AG04449 (cell line): ENCODE measurements at regions of chr11 and their contacts with region 1.

Region 1: DNA sequence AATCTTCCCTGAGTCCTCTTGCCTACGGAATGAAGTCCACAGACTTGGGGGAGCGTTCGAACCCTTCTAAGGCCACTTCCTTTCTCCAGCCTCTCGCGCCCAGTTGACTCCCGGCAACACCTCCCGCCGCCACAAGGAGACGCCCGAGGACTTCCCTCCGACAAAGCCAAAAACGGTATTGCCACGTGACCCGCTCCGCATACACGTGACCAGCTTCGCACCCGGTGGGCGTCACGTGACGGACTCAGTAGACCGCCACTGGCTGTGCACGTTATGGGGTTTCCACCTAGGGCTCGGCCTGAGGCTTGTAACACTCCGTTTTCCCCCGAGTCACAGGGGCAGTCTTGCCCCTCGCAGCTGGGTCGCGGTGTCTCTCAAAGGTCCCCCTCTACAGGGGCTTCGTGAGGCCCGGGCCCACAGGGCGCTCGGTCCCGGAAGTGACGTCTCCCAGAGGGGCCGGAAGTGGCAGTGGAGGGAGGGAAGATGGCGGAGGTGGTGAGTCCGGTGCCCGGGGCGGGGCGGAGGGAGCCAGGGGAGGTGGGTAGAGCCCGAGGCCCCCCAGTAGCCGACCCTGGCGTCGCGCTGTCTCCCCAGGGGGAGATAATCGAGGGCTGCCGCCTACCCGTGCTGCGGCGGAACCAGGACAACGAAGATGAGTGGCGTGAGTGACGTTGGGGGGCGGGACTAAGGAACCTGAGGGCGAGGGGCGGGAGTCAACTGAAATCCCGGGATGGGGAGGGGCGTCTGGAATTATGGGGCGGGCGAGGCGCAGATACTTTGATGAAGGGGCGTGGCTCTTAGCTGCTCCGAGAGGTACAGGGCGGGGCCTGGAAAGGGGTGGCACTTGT is at the start of gene KAT5:
- DNase-seq: peak; percentile 83
- H3K4me3 ChIP-seq: peak within 1 kb of the TSS; percentile 87
- CTCF ChIP-seq: peak; percentile 94

Region 2: DNA sequence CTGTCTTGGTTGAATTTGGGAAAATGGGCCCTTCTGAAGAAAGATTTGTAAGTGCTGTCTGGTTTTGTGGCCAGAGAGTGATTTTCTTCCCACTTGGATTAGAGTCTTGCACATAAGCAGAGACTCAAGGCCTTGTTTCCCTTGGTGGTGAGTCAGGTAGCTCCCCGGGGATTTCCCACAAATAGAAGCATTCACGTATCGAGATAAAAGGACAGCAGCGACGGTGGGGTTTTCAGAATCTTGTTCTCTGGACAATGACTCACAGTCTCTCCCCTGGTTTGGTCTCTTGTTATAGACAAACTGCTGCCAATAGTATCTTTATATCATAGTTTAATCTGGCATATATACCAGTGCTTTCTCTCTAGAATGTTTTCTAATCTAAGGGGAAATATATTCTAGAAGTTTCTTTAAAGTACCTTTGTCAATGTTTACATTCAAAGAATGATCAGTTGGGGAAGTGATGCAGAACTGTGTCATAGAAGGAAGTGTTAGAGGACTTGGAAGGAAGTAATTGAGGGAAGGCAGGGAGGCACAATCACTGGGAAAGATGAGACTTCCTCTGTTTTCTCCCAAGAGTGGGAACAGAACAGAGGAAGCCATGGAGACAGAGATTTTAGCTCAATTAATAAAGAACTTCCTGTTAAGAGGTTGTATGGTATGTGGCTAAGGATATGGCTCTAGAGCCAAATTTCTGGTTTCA is 432.1 kb before region 1 on chr11:
- CTCF ChIA-PET with region 1: no interaction called
- POLR2A ChIA-PET with region 1: no interaction called
- DNase-seq: peak; percentile 91
- H3K4me3 ChIP-seq: no peak overlapping the region
- CTCF ChIP-seq: no peak

Region 3: GRCh38 chr11:65773784-65774411 is 61.9 kb after region 1 on chr11:
- CTCF ChIA-PET with region 1: interaction called, 43 read pairs
- POLR2A ChIA-PET with region 1: no interaction called
- DNase-seq: no peak
- H3K4me3 ChIP-seq: no peak overlapping the region
- CTCF ChIP-seq: no peak

Region 4: DNA sequence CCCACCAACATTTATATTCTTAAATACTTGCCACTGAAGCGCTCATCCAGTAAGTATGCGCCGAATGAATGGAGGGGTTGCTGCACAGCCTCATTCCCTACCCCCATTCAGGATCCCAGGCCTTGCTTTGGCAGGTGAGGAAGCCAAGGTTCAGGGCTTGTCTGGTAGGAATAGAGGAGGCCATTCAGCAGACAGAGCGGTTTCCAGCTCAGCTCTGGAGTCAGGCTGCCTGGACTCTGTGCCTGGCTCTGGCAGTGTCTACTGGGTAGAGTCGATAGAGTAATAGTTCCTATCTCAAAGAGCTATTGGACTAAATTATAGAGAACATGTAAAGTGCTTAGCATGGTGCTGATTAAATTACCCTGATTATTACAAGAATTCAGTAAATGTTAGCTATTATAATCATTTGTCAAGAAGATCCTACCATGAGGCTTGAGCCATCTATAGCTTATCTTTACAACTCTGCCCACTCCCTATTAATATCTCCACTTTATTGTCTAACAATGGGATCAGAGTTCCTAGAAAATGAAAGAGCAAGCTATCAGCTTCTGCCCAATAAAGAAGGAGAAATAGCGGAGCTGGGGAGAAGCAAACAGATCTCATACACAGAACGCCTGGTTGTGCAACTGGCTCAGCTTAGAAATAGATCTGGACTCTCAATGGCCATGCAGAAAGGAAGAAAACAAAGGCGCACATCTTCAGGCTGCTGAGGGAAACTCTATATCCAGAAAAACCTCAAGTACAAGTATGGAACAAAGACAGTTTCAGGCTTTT is 115.1 kb after region 1 on chr11:
- CTCF ChIA-PET with region 1: interaction called, 170 read pairs
- POLR2A ChIA-PET with region 1: interaction called, 4 read pairs
- DNase-seq: no peak
- H3K4me3 ChIP-seq: no peak overlapping the region
- CTCF ChIP-seq: no peak

Region 5: GRCh38 chr11:65859200-65859811 is 147.3 kb after region 1 on chr11:
- CTCF ChIA-PET with region 1: interaction called, 27 read pairs
- POLR2A ChIA-PET with region 1: interaction called, 20 read pairs
- DNase-seq: peak; percentile 88
- H3K4me3 ChIP-seq: peak overlapping the region; percentile 95
- CTCF ChIP-seq: peak; percentile 25

Region 6: DNA sequence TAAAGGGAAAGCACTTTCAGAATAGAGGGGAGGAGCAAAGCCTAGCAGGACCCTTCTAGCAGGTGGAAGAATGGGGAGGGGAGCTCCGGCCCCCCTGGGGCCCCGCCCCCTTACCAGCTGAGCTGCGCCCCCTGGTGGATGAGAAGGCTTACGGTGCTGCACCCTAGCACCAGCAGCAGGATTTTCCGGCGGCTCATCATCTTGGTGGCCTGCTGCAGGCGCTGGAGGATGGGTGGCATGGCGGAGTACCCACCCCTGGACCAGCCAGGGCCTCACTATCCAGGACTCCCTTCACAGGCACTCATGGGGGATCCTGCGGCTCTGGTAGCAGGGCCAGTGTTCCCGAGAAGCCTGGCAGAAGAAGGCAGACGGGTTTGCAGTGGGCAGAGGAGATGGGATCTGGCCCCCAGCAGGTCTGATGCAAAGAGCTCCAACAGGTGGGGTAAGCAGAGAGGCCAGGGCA is 333.2 kb after region 1 on chr11:
- CTCF ChIA-PET with region 1: interaction called, 10 read pairs
- POLR2A ChIA-PET with region 1: no interaction called
- DNase-seq: no peak
- H3K4me3 ChIP-seq: no peak overlapping the region
- CTCF ChIP-seq: peak; percentile 93